MCF 10A (cell line): ENCODE measurements at regions of chr5 and their contacts with region 1.

Region 1: DNA sequence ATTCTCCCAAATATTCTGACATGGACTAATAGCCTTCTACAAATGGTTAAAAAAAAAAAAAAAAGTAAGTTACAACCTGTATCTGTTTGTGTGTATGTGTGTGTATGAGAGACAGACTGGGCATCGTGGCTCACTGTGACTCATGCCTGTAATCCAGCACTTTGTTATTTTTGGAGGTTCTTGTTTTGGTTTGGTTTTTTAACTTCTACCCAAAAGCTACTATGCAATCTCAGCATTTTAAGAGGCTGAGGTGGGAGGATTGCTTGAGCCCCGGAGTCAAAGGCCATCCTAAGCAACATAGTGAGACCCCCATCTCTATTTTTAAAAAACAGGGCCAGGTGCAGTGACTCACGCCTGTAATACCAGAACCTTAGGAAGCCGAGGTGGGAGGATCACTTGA is 17.6 kb upstream of the HAVCR1 start:
- DNase-seq: peak; percentile 77
- H3K4me3 Mint-ChIP-seq: no peak overlapping the region
- H3K27ac Mint-ChIP-seq: no peak overlapping the region
- H3K4me1 Mint-ChIP-seq: peaks cover 16% of the 10 kb centered on the region
- H3K27me3 Mint-ChIP-seq: no peaks in the 10 kb centered on the region
- CTCF ChIP-seq: no peak

Region 2: DNA sequence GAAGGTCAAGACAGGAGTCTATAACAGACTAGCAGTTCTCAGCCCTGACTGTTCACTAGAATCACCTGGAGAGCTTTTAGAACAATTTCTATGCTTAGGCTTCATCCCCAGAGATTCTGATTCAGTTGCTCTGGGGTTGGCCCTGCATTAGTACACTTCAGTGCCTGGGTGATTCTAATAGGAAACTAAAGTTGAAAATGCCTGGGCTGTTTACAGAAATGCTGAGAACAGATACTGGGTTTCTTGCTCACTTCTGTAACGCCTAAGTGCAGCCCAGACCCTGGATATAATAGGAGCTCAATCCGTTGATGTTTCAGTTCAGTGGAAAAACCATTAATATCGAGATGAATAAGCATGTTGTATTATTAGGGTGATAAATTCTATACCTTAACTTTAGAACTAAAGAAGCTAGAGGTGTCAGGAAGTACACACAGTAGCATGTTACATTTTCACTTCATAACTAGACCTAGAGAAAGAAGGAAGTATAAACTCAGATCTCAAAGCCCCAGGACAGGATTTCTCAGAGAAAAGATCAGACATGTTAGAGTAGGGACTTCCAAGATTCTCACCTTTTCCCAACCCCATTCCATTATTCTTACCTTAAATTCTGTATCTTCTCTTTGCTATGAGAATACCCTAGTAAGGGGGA is 11.9 kb after region 1 on chr5:
- CTCF ChIA-PET with region 1: no interaction called
- POLR2A ChIA-PET with region 1: no interaction called
- intact Hi-C with region 1: no loop called
- DNase-seq: no peak
- H3K4me3 Mint-ChIP-seq: no peak overlapping the region
- H3K27ac Mint-ChIP-seq: no peak overlapping the region
- H3K4me1 Mint-ChIP-seq: no peaks in the 10 kb centered on the region
- H3K27me3 Mint-ChIP-seq: no peaks in the 10 kb centered on the region
- CTCF ChIP-seq: no peak

Region 3: GRCh38 chr5:157142317-157143126 is 66.0 kb after region 1 on chr5 and contains the start of gene MED7:
- CTCF ChIA-PET with region 1: no interaction called
- POLR2A ChIA-PET with region 1: interaction called, 10 read pairs
- intact Hi-C with region 1: no loop called
- DNase-seq: peak; percentile 100
- H3K4me3 Mint-ChIP-seq: peak within 1 kb of the TSS; percentile 83
- H3K27ac Mint-ChIP-seq: peak within 1 kb of the TSS; percentile 94
- H3K4me1 Mint-ChIP-seq: peaks cover 7% of the 10 kb centered on the region
- H3K27me3 Mint-ChIP-seq: no peaks in the 10 kb centered on the region
- CTCF ChIP-seq: no peak
- total RNA-seq, gene MED7: 14.7 and 16.9 TPM in 2 replicates